PC-9 (cell line): ENCODE measurements at regions of chr2 and their contacts with region 1.

Region 1: DNA sequence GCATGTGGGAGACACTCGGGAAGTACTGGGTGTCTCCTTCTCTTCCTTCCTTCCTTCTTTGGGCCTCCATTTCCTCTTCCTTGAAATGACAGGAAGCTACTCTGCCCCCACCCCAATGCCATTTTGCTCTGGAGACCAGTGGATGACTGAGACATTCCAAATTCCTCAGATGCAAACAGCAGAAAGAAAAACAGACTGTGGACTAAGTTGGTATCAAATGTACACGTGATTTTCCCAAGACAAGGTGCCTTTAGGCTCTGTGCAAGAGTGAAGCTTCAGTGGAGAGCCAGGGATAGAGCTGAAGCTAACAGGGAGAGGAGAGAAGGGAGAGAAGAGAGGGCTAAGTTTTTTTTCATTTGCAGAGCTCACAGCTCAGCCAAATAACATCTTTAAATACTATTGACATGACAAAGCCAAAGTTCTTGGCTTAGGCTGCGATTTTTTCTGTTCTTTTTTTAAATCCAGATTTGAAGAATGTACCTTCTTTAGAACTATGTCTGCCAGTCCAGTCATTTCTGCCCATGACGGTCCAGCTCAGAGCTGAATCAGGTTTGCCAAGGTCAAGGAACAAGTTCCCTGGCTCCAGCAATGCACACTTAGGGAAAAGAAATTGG is 84.5 kb upstream of the LCLAT1 start:
- DNase-seq: peak; percentile 45 to 91
- H3K4me3 ChIP-seq: no peak overlapping the region
- H3K27ac ChIP-seq: peak overlapping the region; percentile 73
- H3K4me1 ChIP-seq: peaks cover 35% of the 10 kb centered on the region
- H3K27me3 ChIP-seq: no peaks in the 10 kb centered on the region
- CTCF ChIP-seq: no peak

Region 2: DNA sequence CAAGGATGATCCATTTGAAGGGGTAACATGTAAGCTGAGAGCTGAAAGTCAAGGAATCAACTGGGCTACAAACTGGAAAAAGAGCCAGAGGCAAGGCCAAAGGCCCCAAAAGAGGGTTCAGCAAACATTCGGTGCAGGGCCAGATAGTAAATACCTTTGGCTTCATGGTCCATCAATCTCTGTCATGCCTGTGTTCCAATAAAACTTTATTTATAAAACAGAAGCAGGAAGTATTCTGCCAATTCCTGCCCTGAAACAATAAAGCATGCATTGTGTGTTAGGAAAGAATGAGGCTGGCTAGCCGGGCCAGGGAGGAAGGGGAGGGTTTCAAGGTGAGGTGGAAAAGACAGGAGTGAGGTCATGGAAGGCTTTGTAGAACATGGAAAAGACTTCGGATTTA is 24.1 kb before region 1 on chr2:
- CTCF ChIA-PET with region 1: interaction called, 12 read pairs
- POLR2A ChIA-PET with region 1: no interaction called
- intact Hi-C with region 1: no loop called
- DNase-seq: no peak
- H3K4me3 ChIP-seq: no peak overlapping the region
- H3K27ac ChIP-seq: no peak overlapping the region
- H3K4me1 ChIP-seq: no peaks in the 10 kb centered on the region
- H3K27me3 ChIP-seq: no peaks in the 10 kb centered on the region
- CTCF ChIP-seq: no peak